Heart left ventricle (tissue), 16 donors: ENCODE measurements at regions of chr7 and their contacts with region 1.

Region 1: GRCh38 chr7:154927624-154928143 is 75.2 kb downstream of the PAXIP1 start:
- DNase-seq: peak in 4 of 5 donors; percentile 58 to 78 (median 74)
- ATAC-seq: peak; percentile 43 to 90 (median 84)
- H3K4me3 ChIP-seq: peak overlapping the region; percentile 9 to 76 (median 64)
- H3K27ac ChIP-seq: peak overlapping the region; percentile 8 to 90 (median 77)
- H3K4me1 ChIP-seq: peaks cover 0 to 19% (median 6%) of the 10 kb centered on the region in 12 donors
- H3K27me3 ChIP-seq: no peaks in the 10 kb centered on the region
- CTCF ChIP-seq: peak; percentile 33 to 80 (median 64)
- POLR2A ChIP-seq: no peak

Region 2: DNA sequence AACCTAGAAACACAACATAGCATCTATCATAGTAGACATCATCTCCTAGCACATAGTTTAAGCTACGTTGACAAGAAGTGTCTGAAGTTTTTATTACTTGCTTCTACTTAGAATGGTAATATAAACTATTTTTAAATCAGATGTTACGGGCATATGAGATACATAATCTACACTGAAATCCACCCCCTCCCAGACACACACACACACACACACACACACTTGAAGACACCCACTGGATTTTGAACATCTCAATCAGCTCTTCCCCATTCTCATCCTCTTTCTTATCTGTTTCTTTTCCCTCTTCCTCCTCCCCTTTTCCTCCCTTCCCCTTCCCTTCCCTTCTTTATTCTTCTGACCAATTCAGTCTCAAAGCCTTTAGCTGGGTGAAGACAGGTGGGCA is 100.7 kb before region 1 on chr7:
- intact Hi-C with region 1: no loop called
- DNase-seq: no peak
- ATAC-seq: no peak
- H3K4me3 ChIP-seq: no peak overlapping the region
- H3K27ac ChIP-seq: no peak overlapping the region
- H3K4me1 ChIP-seq: no peaks in the 10 kb centered on the region
- H3K27me3 ChIP-seq: peaks cover 0 to 43% (median 0%) of the 10 kb centered on the region in 9 donors
- CTCF ChIP-seq: no peak
- POLR2A ChIP-seq: no peak

Region 3: DNA sequence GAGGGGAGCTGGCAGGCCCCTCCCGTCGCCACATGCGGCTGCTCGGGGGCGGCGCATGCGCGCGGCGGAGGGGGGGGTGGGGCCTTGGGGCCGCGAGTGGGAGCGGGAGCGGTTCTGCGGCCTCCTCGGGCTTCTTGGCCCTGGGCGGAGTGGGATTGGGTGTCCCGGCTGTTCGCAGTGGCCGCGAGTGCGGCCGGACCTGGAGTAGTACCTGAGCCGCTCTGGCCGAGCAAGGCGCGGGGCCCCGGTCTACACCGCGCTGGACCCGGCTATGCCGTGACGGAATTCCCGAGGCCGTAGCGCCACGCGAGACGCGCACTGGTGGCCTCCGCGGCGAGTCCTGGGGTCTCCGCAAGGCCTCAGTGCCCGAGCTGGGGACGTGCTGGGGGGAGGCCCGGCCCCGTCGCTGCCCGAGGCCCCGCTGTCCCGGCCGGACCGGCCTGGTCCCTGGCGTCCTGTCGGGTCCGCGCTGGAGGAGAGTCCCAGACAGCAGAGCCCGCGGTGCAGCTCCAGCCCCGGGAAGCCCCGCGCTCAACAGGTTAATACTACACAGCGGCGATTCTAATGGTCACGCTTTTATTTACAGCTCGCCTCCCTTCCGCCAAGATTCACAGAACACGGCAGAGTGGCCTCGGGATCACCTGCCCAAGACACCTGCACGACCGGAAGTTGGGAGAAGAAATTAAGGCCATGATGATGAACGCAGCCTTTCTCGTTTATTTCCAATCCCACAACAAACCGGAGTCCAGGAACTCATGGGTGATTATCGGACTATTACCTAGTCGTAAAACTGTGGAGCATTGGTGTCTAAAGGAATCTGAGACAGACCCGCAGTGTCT is 75.9 kb after region 1 on chr7:
- intact Hi-C with region 1: loop called (anchors 2 to 10 kb)
- DNase-seq: peak; percentile 78 to 90 (median 85)
- ATAC-seq: peak; percentile 90 to 98 (median 98)
- H3K4me3 ChIP-seq: peak overlapping the region; percentile 57 to 100 (median 95)
- H3K27ac ChIP-seq: peak overlapping the region; percentile 89 to 96 (median 92)
- H3K4me1 ChIP-seq: peaks cover 0 to 24% (median 15%) of the 10 kb centered on the region in 12 donors
- H3K27me3 ChIP-seq: no peaks in the 10 kb centered on the region
- CTCF ChIP-seq: no peak
- POLR2A ChIP-seq: peak in 1 of 2 donors; percentile 78

Region 4: DNA sequence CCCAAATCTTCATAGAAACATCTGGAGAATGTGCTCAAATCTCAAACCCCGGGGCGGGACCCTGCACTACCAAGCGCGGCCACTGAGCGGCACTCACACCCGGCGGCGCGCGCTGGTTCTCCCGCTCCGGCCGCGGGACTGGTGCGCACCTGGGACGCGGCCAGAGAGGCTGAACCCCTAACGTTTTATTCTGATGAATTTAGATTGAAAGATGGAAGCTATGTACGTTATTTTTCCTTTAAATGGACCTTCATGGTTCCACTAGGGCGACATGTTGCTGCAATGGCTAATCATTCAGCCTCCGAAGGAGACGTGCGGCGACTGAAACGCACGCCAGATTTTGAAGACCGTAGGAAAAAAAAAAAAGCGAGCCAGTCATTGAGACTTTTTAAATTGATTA is 263.0 kb after region 1 on chr7:
- intact Hi-C with region 1: loop called in 4 of 10 experiments (anchors 5 to 10 kb)
- DNase-seq: peak in 1 of 5 donors; percentile 49
- ATAC-seq: peak in 3 of 4 donors; percentile 69 to 75 (median 73)
- H3K4me3 ChIP-seq: peak overlapping the region in 3 of 12 donors; percentile 9 to 22 (median 12)
- H3K27ac ChIP-seq: no peak overlapping the region
- H3K4me1 ChIP-seq: peaks cover 0 to 5% (median 2%) of the 10 kb centered on the region in 12 donors
- H3K27me3 ChIP-seq: peaks cover 0 to 19% (median 7%) of the 10 kb centered on the region in 9 donors
- CTCF ChIP-seq: peak; percentile 80 to 93 (median 85)
- POLR2A ChIP-seq: no peak

Region 5: DNA sequence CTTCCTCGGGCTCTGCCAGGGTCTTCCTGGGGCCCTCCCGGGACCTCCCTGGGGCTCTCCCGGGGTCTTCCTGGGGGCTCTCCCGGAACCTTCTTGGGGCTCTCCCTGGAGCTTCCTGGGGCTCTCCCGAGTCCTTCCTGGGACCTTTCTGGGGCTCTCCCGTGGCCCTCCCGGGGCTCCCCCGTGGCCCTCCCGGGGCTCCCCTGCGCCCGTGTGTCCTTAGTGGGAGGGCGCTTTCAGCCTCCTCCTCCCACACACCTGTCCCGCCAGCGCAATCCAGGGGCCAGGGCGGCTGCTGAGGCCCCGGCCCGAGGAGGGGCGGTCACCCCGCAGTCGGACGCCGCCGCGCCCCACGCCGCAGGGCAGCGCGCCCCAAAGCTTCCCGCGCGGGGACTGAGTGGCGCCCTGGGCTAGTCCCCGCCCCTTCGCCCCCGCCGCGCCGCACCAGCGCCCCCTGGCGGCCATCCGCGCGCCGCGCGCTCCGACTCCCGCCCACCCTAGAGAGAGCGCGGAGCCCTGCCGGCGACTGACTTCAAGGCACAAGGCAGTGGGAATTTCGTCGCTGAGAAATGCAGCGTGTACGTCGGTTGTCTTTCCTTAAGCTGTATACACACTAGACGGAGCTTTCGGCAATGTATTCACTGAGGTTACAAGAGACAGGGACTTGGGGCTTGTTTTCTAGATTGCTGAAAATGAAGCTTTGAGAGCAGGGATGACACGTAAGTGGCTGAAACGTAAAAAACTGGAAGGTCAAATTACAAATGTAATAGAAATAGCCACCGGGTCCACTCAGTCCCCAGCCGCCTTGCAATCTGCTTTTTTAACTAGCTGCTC is 417.1 kb after region 1 on chr7:
- intact Hi-C with region 1: loop called (anchors 1 to 5 kb)
- DNase-seq: peak; percentile 67 to 91 (median 74)
- ATAC-seq: peak; percentile 67 to 99 (median 90)
- H3K4me3 ChIP-seq: peak overlapping the region in 10 of 12 donors; percentile 16 to 53 (median 42)
- H3K27ac ChIP-seq: no peak overlapping the region
- H3K4me1 ChIP-seq: peaks cover 0 to 10% (median 4%) of the 10 kb centered on the region in 12 donors
- H3K27me3 ChIP-seq: peaks cover 5 to 21% (median 7%) of the 10 kb centered on the region in 9 donors
- CTCF ChIP-seq: peak in 11 of 12 donors; percentile 65 to 97 (median 89)
- POLR2A ChIP-seq: peak in 1 of 2 donors; percentile 6

Region 6: DNA sequence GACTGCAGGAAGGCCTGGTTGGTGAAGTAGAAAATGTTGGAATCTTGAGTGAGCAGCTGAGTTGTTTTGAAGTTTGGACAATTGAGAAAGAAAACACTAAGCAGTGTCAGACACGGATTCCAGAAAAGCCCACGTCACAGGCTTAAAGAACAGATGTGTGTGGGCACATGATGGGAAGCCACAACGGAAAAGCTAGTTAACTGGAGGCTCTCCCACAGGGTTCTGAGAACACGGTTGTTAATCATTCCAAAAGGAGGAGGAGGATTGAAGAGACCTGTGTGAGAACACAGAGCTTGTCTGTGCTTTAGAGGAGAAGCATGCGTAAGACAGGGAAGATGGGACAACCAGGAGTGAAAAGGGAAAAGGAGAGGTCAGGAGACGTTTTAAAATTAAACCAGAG is 842.0 kb after region 1 on chr7:
- intact Hi-C with region 1: loop called in 2 of 10 experiments (anchors 5 kb)
- DNase-seq: no peak
- ATAC-seq: peak in 3 of 4 donors; percentile 7 to 61 (median 60)
- H3K4me3 ChIP-seq: no peak overlapping the region
- H3K27ac ChIP-seq: peak overlapping the region in 4 of 12 donors; percentile 18 to 66 (median 40)
- H3K4me1 ChIP-seq: peaks cover 0 to 17% (median under 1%) of the 10 kb centered on the region in 12 donors
- H3K27me3 ChIP-seq: no peaks in the 10 kb centered on the region
- CTCF ChIP-seq: no peak
- POLR2A ChIP-seq: no peak